ENCODE measurements at regions of chr6 and their contacts with region 1.

Region 1: GRCh38 chr6:111721753-111722154 is 116.1 kb upstream of the TRAF3IP2 start:
- DNase-seq: no peak
- ATAC-seq: peak; percentile 28
- H3K4me3 ChIP-seq: no peak overlapping the region
- H3K27ac ChIP-seq: no peak overlapping the region
- H3K4me1 ChIP-seq: peaks cover 40% of the 10 kb centered on the region
- H3K27me3 ChIP-seq: no peaks in the 10 kb centered on the region
- CTCF ChIP-seq: peak; percentile 50 to 68 (median 67)
- EP300 ChIP-seq: no peak
- POLR2A ChIP-seq: no peak
- RAD21 ChIP-seq: peak; percentile 75

Region 2: DNA sequence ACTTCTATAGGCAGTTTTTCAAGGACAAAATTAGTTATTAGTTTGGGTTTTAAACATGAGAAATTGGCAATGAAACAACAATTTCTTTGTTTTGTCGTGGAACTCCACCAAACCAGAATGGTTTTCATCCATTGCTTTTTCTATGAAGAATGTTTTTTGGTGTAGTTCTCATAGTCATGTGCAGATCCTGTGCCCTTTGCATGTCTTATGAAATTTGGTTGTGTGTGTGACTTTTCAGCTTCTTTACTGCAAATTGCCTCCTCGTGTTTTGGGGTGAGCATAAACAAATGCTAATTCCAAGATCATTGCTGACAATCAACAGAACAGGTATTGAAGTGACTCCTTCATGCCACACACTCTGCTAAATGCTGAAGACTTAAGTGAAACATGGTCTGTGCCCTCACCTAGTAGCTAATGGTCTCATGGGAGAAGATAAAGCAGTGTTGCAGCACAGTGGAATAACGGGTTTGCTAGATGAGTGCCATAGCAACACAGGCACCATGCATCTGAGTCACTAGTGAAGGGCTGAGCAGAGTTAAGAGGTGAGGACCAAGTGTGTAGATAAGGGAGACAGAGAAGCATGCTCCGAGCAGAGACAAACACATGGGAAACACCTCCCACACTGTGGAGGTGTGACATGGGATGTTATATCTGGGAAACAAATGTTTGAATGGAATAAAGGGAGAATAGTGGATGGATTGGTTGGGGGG is 514.5 kb before region 1 on chr6:
- CTCF ChIA-PET with region 1: no interaction called
- POLR2A ChIA-PET with region 1: no interaction called
- RAD21 ChIA-PET with region 1: no interaction called
- SMC1A ChIA-PET with region 1: no interaction called
- in situ Hi-C with region 1: no loop called
- intact Hi-C with region 1: no loop called
- DNase-seq: no peak
- ATAC-seq: no peak
- H3K4me3 ChIP-seq: no peak overlapping the region
- H3K27ac ChIP-seq: no peak overlapping the region
- H3K4me1 ChIP-seq: no peaks in the 10 kb centered on the region
- H3K27me3 ChIP-seq: no peaks in the 10 kb centered on the region; a peak in 1 of 4 replicates
- CTCF ChIP-seq: no peak
- EP300 ChIP-seq: no peak
- POLR2A ChIP-seq: no peak
- RAD21 ChIP-seq: no peak

Region 3: DNA sequence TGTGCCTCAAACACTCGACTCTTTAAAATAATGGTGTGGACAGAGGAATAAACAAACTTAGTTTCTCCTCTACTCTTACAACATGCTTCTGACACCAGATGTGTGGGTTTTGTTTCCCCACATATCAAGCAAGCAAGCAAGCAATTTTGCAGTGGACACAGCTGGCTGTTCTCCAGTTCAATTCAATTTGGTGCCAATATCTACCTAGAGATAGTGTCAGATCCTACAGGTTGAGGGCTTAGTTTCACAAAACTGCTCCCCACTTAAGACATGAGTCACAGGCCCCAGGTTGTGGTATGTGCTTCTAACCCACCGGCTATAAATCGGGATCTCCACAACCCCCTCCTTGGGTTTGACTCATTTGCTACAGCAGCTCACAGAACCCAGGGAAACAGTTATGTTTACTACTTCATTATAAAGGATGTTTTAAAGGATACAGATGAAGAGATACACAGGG is 15.3 kb after region 1 on chr6:
- CTCF ChIA-PET with region 1: interaction called, 26 read pairs
- POLR2A ChIA-PET with region 1: interaction called, 19 read pairs
- RAD21 ChIA-PET with region 1: interaction called, 16 read pairs
- SMC1A ChIA-PET with region 1: interaction called, 181 read pairs
- in situ Hi-C with region 1: no loop called
- intact Hi-C with region 1: loop called (anchors 1 kb)
- DNase-seq: no peak
- ATAC-seq: no peak
- H3K4me3 ChIP-seq: no peak overlapping the region
- H3K27ac ChIP-seq: 0 out of 2 replicates have a peak overlapping the region, but pooled peaks have one; percentile 6
- H3K4me1 ChIP-seq: peaks cover 80% of the 10 kb centered on the region
- H3K27me3 ChIP-seq: no peaks in the 10 kb centered on the region
- CTCF ChIP-seq: no peak
- EP300 ChIP-seq: no peak
- POLR2A ChIP-seq: no peak
- RAD21 ChIP-seq: no peak

Region 4: GRCh38 chr6:111750753-111751684 is 29.3 kb after region 1 on chr6:
- CTCF ChIA-PET with region 1: interaction called, 16 read pairs
- POLR2A ChIA-PET with region 1: interaction called, 7 read pairs
- RAD21 ChIA-PET with region 1: interaction called, 12 read pairs
- SMC1A ChIA-PET with region 1: interaction called, 181 read pairs
- in situ Hi-C with region 1: no loop called
- intact Hi-C with region 1: no loop called
- DNase-seq: no peak
- ATAC-seq: peak; percentile 83
- H3K4me3 ChIP-seq: no peak overlapping the region
- H3K27ac ChIP-seq: peak overlapping the region; percentile 85
- H3K4me1 ChIP-seq: peaks cover 69% of the 10 kb centered on the region
- H3K27me3 ChIP-seq: no peaks in the 10 kb centered on the region
- CTCF ChIP-seq: no peak
- EP300 ChIP-seq: peak; percentile 27 to 70; a peak in 2 of 4 replicates
- POLR2A ChIP-seq: no peak
- RAD21 ChIP-seq: peak; percentile 19; the same call in 1 of the 2 replicates

Region 5: DNA sequence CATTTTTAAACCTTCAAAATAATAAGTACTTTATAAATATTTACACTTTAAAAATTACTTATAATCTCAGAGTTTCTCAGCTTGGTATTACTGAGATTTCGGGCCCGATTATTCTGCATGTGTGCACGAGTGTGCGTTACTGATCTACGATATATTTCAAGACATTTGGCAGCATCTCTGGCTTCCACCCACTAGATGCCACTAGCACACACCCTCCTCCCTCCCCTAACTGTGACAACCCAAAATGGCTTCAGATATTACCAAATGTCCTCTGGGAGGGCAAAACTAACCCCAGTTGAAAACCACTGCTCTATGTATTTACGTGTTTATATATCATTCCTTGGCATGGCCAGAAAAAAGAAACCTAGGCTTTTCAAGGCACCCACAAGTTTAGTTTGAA is 55.6 kb after region 1 on chr6:
- CTCF ChIA-PET with region 1: interaction called, 9 read pairs
- POLR2A ChIA-PET with region 1: interaction called, 6 read pairs
- RAD21 ChIA-PET with region 1: interaction called, 5 read pairs
- SMC1A ChIA-PET with region 1: interaction called, 17 read pairs
- in situ Hi-C with region 1: no loop called
- intact Hi-C with region 1: no loop called
- DNase-seq: no peak
- ATAC-seq: peak; percentile 82
- H3K4me3 ChIP-seq: no peak overlapping the region
- H3K27ac ChIP-seq: peak overlapping the region; percentile 61
- H3K4me1 ChIP-seq: peaks cover 22% of the 10 kb centered on the region
- H3K27me3 ChIP-seq: no peaks in the 10 kb centered on the region
- CTCF ChIP-seq: peak; percentile 39 to 50 (median 43); a peak in 4 of 6 replicates
- EP300 ChIP-seq: no peak
- POLR2A ChIP-seq: no peak
- RAD21 ChIP-seq: peak; percentile 72

Region 6: DNA sequence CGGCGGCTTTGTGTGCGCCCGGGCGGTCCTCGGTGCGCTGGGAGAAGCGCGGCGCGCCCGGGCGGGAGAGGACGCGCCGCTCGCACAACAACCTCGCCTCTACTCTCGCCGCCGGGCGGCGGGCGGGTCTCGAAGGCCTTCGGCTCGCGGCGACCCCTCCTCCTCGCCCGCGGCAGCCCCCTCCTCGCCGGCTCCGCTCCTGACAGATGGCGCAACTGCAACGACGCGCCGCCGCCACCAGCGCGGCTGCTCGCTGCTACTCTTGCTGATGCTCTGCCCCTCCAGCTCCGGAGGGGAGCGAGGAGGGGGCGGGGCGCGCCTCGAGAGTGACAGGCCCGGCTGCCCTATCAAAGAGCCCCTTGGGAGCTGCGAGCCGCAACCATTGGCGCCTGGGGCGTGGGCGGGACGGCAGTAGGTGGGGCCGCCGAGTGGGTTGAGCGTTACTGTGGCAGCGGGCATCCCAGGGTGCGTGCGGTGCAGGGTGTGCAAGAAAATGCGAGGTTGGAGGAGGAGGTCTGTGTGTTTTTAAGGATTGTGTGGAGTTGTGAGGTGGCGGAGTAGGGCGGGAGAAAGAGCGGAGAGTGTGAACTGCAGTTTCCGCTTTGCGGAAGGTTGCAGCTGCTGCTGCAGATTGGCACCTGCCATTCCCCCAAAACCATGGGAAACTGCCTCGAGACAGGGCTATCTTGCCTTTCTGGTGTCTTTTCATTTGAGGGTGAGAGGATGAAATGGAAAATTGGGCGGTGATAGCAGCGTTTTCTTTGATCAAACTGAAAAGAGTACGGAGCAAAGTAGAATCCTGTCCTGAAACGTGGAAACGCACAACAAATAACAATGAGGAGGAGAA is 151.6 kb after region 1 on chr6 and contains the start of gene FYN:
- CTCF ChIA-PET with region 1: interaction called, 3 read pairs
- POLR2A ChIA-PET with region 1: no interaction called
- RAD21 ChIA-PET with region 1: interaction called, 3 read pairs
- SMC1A ChIA-PET with region 1: interaction called, 3 read pairs
- in situ Hi-C with region 1: no loop called
- intact Hi-C with region 1: loop called (anchors 5 kb)
- DNase-seq: peak; percentile 76
- ATAC-seq: peak; percentile 92
- H3K4me3 ChIP-seq: peak within 1 kb of the TSS; percentile 98
- H3K27ac ChIP-seq: peak within 1 kb of the TSS; percentile 76
- H3K4me1 ChIP-seq: peaks cover 5% of the 10 kb centered on the region
- H3K27me3 ChIP-seq: no peaks in the 10 kb centered on the region
- CTCF ChIP-seq: peak; percentile 28 to 65 (median 30); a peak in 5 of 6 replicates
- EP300 ChIP-seq: no peak
- POLR2A ChIP-seq: peak; percentile 95
- RAD21 ChIP-seq: peak; percentile 48
- polyA plus RNA-seq, gene FYN: 51.4 to 55.1 TPM

Measured in GM12878 (cell line).